ENCODE measurements at regions of chr1 and their contacts with region 1.

Region 1: DNA sequence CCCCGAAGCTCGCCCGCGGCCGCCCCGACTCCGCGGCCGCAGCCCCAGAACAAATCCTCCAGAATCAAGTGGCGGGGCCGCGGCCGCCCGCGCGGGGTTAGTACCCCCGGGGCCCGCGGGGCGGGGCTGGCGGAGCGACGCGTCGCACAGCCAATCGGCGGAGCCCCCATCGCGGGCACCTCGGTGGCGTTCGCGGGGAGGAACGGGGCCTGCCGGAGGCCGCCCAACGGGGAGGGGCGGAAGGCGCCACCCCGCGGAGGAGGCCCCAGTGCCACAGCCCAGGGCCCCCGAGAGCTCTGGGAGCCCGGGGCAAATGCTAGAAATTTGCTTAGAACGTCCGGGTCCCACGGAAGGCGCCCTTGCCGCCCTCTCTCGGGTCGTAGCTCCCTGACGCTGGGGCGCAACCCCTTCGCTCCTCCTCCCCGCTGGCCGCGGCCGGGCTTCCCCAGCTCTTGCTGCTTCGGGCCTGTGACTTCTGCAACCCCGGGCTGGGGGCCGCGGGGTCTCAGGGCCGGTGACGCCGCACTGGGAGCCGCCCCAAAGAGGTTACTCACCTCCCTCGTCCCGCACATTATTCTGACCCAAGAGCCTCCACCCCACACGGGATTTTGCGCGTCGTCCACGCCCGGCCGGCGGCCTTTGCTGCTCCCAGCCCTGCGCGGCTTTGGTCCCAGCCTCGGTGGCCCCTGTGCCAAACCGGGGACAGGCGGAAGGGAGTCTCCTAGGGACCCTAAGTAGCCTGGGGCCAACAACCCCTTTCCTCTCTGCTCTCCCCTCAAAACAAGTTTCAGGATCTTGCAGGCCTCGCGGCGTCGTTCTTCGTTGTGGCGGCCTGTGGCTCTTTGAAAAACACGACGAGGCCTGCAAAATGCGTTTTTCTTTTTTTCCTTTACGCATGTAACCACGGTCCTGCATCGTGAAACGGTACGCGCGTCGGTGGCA is at the start of gene RUNX3:
- DNase-seq: peak; percentile 92
- total RNA-seq, gene RUNX3: 5.0 to 8.9 TPM

Region 2: GRCh38 chr1:24779689-24780464 is 150.6 kb before region 1 on chr1:
- intact Hi-C with region 1: no loop called
- DNase-seq: no peak

Region 3: DNA sequence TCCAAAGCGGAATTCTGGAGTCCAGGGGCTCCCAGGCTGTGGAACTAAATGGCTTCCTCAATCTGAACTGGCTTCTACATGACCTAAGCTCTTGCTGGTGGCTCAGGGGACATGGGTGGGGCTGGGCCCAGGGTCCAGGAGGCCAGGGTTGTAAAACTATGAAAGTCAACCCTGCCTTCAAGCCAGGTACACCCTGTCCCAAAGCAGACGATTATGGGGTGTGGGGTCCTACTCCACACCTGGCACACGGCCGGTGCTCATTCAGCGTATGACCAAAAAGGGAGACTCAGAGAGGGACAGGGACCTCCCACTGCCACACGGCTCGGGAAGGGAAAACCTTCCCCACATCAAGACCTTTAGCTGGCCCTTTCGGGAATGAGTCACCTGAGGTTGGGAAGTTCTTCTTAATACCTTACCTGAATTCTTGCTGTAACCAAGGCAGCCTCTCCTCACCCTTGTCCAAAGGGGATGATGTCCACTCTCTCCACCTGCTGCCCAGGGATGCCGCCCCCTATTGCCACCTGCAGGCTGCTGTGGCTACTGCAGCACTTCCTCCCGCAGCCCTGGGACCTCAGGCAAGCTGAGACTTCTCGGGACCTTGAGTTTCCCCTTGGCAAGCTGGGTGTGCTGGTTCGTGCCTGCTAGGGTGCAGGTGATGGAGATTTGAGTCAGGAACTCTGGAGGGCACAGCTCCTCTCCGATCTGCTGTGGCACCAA is 32.5 kb before region 1 on chr1:
- intact Hi-C with region 1: no loop called
- DNase-seq: peak; percentile 88

Region 4: GRCh38 chr1:25037174-25038074 is 106.9 kb after region 1 on chr1:
- intact Hi-C with region 1: loop called in 1 of 2 experiments (anchors 5 kb)
- DNase-seq: no peak

Region 5: GRCh38 chr1:25099343-25099951 is 169.0 kb after region 1 on chr1:
- intact Hi-C with region 1: loop called in 1 of 2 experiments (anchors 10 kb)
- DNase-seq: no peak